Ascending aorta (tissue), 2 donors: ENCODE measurements at regions of chr7 and their contacts with region 1.

Region 1: GRCh38 chr7:87876040-87876868 is at the starts of genes DBF4 and SLC25A40:
- DNase-seq: peak; percentile 78 to 96
- H3K4me3 ChIP-seq: peak within 1 kb of the TSS; percentile 63 to 76
- H3K27ac ChIP-seq: peak within 1 kb of the TSS; percentile 90 to 91
- H3K4me1 ChIP-seq: peaks cover 0 to 4% of the 10 kb centered on the region in 2 donors
- H3K27me3 ChIP-seq: no peaks in the 10 kb centered on the region
- CTCF ChIP-seq: no peak
- total RNA-seq, gene DBF4: not detected
- total RNA-seq, gene SLC25A40: 4.0 TPM

Region 2: GRCh38 chr7:86939197-86939814 is 936.9 kb before region 1 on chr7:
- intact Hi-C with region 1: loop called (anchors 10 kb)
- DNase-seq: no peak
- H3K4me3 ChIP-seq: no peak overlapping the region
- H3K27ac ChIP-seq: no peak overlapping the region
- H3K4me1 ChIP-seq: no peaks in the 10 kb centered on the region
- H3K27me3 ChIP-seq: no peaks in the 10 kb centered on the region
- CTCF ChIP-seq: peak; percentile 38 to 62 (median 61)

Region 3: GRCh38 chr7:87219545-87220025 is 656.7 kb before region 1 on chr7 and contains the start of gene TMEM243:
- intact Hi-C with region 1: loop called (anchors 10 kb)
- DNase-seq: peak; percentile 39 to 90
- H3K4me3 ChIP-seq: peak within 1 kb of the TSS; percentile 95 to 98
- H3K27ac ChIP-seq: peak within 1 kb of the TSS; percentile 90 to 91
- H3K4me1 ChIP-seq: peaks cover 2 to 8% of the 10 kb centered on the region in 2 donors
- H3K27me3 ChIP-seq: no peaks in the 10 kb centered on the region
- CTCF ChIP-seq: peak in 1 of 3 experiments; percentile 5
- total RNA-seq, gene TMEM243: 27.5 TPM

Region 4: GRCh38 chr7:87506246-87507180 is 369.7 kb before region 1 on chr7:
- intact Hi-C with region 1: loop called (anchors 10 kb)
- DNase-seq: no peak
- H3K4me3 ChIP-seq: no peak overlapping the region
- H3K27ac ChIP-seq: no peak overlapping the region
- H3K4me1 ChIP-seq: no peaks in the 10 kb centered on the region
- H3K27me3 ChIP-seq: no peaks in the 10 kb centered on the region
- CTCF ChIP-seq: peak in 2 of 3 experiments; percentile 20 to 36

Region 5: DNA sequence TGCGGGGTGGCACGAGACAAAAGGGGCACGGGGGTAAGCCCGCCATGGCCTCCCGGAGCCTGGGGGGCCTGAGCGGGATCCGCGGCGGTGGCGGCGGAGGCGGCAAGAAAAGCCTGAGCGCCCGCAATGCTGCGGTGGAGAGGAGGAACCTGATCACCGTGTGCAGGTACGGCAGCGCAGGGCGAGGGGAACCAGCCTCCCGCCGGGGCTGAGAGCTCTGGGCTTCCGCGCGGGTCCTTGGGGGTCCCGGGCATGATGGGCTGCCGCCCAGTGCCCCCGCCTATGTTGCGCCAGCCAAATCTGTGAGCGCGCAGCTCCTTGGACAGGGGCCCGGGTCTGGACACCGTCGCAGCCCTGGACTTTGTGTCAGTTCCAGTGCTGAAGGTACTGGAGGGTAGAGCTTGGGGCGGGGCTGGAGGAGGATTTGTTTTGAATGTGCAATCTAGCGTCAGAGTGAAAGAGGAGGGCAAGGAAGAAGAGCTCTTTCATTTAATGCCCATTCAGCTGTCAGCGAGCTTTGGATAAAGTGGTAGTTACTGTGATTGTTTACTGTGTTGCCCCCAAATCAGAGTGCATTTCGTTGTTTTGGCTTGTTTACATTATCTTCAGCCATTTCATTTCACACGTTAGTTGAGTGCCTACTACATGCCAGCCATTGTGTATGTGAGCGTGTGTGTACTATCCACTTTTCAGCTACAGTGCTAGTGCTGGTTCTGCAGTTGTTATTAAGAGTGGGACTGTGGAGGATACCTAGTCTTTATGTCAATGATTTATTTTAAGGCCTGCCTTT is 247.3 kb before region 1 on chr7:
- intact Hi-C with region 1: loop called (anchors 5 kb)
- DNase-seq: no peak
- H3K4me3 ChIP-seq: peak overlapping the region; percentile 66 to 71
- H3K27ac ChIP-seq: no peak overlapping the region
- H3K4me1 ChIP-seq: peaks cover 2 to 5% of the 10 kb centered on the region in 2 donors
- H3K27me3 ChIP-seq: no peaks in the 10 kb centered on the region
- CTCF ChIP-seq: no peak

Region 6: DNA sequence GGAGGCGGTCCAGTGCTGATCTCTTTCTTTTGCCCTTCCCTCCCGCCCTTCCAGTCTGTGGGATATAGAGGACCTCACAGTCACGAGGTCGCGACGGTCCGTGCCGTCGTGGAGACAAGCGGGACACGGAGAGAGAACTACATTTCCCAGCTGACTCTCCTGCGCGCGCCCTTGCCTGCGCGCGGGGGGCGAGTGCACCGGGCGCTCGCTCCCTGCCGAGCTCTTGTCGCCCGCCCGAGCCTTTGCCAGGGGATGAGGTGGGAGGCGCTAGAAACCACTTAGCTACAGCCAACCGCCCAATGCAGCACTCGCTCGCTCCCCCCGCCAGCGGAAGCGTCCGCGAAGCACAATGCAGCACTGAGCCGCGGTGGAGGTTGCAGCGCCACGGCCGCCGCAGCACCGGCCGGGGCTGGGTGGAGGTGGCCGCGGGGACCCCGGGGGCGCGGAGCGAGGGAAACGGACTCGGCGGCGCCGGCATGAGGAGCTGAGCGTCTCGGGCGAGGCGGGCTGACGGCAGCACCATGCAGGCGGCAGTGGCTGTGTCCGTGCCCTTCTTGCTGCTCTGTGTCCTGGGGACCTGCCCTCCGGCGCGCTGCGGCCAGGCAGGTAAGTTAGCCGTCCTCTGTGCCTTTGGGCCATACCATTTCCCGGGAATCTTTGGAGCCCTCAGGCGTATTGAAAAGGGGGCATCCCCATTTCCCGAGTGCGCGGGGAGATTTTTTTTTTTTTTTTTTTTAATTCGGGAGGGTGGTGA is 57.9 kb after region 1 on chr7 and contains the start of gene ADAM22:
- intact Hi-C with region 1: loop called (anchors 2 kb)
- DNase-seq: peak; percentile 29 to 88
- H3K4me3 ChIP-seq: peak within 1 kb of the TSS; percentile 70 to 78
- H3K27ac ChIP-seq: no peak within 1 kb of the TSS
- H3K4me1 ChIP-seq: no peaks in the 10 kb centered on the region
- H3K27me3 ChIP-seq: no peaks in the 10 kb centered on the region
- CTCF ChIP-seq: no peak
- total RNA-seq, gene ADAM22: 0.85 TPM

Region 7: GRCh38 chr7:88219781-88220747 is 343.8 kb after region 1 on chr7 and contains the start of gene SRI:
- intact Hi-C with region 1: loop called (anchors 5 kb)
- DNase-seq: peak; percentile 40 to 93
- H3K4me3 ChIP-seq: peak within 1 kb of the TSS; percentile 82 to 88
- H3K27ac ChIP-seq: peak within 1 kb of the TSS; percentile 86 to 89
- H3K4me1 ChIP-seq: peaks cover 6 to 7% of the 10 kb centered on the region in 2 donors
- H3K27me3 ChIP-seq: no peaks in the 10 kb centered on the region
- CTCF ChIP-seq: peak; percentile 58 to 88 (median 80)
- total RNA-seq, gene SRI: 16.7 TPM